Mammary epithelial cell (primary cell): ENCODE measurements at regions of chr7 and their contacts with region 1.

Region 1: DNA sequence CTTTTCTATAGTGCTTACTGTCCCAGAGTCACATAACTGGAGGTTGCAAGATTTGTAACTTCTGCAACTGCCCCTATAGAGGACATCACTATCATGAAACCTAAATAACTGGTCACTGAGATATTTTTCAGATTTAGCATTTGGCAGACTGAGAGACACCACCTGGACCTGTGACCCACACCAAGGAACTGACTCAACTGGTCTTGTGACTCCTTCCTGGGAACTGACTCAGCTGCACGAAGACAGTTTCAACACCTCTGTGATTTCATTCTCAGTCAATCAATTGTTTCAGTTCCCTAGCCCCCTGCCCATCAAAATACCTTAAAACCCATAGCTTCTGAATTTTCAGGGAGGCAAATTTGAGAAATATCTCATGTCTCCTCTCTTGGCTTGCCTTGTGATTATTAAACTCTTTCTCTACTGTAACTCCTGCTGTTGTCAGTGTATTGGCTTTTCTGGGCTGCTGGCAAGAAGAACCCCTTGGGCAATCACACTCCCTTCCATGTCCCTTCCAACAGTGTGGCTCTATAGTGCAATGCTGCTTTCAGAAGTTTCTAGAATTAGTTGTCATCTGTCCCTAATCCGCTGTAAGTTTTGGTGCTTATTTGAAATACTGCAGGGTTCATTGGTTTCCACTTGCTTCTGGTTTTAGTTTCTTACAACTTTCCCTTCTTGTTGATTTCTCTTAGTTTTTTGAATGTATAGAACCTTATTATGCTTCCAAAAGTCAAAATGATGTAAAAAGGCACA is 127.8 kb upstream of the ADCY1 start:
- DNase-seq: peak; percentile 90
- H3K4me3 ChIP-seq: no peak overlapping the region
- H3K27ac ChIP-seq: peak overlapping the region; percentile 83
- H3K4me1 ChIP-seq: peaks cover 29% of the 10 kb centered on the region
- H3K27me3 ChIP-seq: no peaks in the 10 kb centered on the region
- CTCF ChIP-seq: no peak

Region 2: DNA sequence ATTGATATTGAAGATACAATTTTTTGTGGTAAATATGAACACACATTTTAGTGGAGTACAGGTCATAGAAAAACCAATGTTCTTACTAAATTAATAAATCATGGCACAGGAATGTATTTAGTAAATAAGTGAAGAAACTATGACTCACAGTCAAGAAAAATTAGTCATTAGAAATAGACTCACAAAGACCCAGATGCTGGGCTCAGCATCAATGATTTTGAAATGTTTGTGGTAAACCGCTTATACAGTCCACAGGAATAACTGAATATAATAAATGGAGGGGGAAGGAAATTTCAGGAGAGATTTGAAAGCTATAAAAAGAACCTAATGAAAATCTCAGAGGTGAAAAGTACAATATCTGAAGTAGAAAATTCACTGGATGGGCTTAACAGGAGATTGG is 10.5 kb before region 1 on chr7:
- CTCF ChIA-PET with region 1: no interaction called
- dilution Hi-C with region 1: no loop called
- in situ Hi-C with region 1: no loop called
- intact Hi-C with region 1: loop called (anchors 1 kb)
- DNase-seq: peak; percentile 92
- H3K4me3 ChIP-seq: no peak overlapping the region
- H3K27ac ChIP-seq: peak overlapping the region; percentile 57
- H3K4me1 ChIP-seq: peaks cover 13% of the 10 kb centered on the region
- H3K27me3 ChIP-seq: no peaks in the 10 kb centered on the region
- CTCF ChIP-seq: no peak